GM12878 (cell line): ENCODE measurements at regions of chr4 and their contacts with region 1.

Region 1: GRCh38 chr4:26860157-26860921 is at the start of gene STIM2:
- DNase-seq: peak; percentile 91
- ATAC-seq: peak; percentile 71
- H3K4me3 ChIP-seq: peak within 1 kb of the TSS; percentile 84
- H3K27ac ChIP-seq: peak within 1 kb of the TSS; percentile 72
- H3K4me1 ChIP-seq: peaks cover 19% of the 10 kb centered on the region
- H3K27me3 ChIP-seq: no peaks in the 10 kb centered on the region
- CTCF ChIP-seq: peak; percentile 40 to 41 (median 41); a peak in 4 of 6 replicates
- EP300 ChIP-seq: no peak
- POLR2A ChIP-seq: peak; percentile 90
- RAD21 ChIP-seq: peak; percentile 58
- polyA plus RNA-seq, gene STIM2: 4.7 to 10.3 TPM

Region 2: GRCh38 chr4:26459054-26459755 is 401.1 kb before region 1 on chr4:
- CTCF ChIA-PET with region 1: no interaction called
- POLR2A ChIA-PET with region 1: no interaction called
- RAD21 ChIA-PET with region 1: no interaction called
- SMC1A ChIA-PET with region 1: no interaction called
- in situ Hi-C with region 1: no loop called
- intact Hi-C with region 1: loop called (anchors 5 kb)
- DNase-seq: peak; percentile 26
- ATAC-seq: peak; percentile 90
- H3K4me3 ChIP-seq: no peak overlapping the region
- H3K27ac ChIP-seq: no peak overlapping the region
- H3K4me1 ChIP-seq: no peaks in the 10 kb centered on the region; the same call in 1 of the 2 replicates
- H3K27me3 ChIP-seq: no peaks in the 10 kb centered on the region
- CTCF ChIP-seq: peak; percentile 53 to 65 (median 59); a peak in 5 of 6 replicates
- EP300 ChIP-seq: no peak
- POLR2A ChIP-seq: no peak
- RAD21 ChIP-seq: peak; percentile 76

Region 3: GRCh38 chr4:26746802-26747213 is 113.5 kb before region 1 on chr4:
- CTCF ChIA-PET with region 1: interaction called, 5 read pairs
- POLR2A ChIA-PET with region 1: no interaction called
- RAD21 ChIA-PET with region 1: interaction called, 7 read pairs
- SMC1A ChIA-PET with region 1: no interaction called
- in situ Hi-C with region 1: no loop called
- intact Hi-C with region 1: loop called (anchors 2 kb)
- DNase-seq: peak; percentile 55
- ATAC-seq: peak; percentile 100
- H3K4me3 ChIP-seq: no peak overlapping the region
- H3K27ac ChIP-seq: no peak overlapping the region
- H3K4me1 ChIP-seq: peaks cover 16% of the 10 kb centered on the region
- H3K27me3 ChIP-seq: no peaks in the 10 kb centered on the region
- CTCF ChIP-seq: no peak
- EP300 ChIP-seq: peak; percentile 78 to 96
- POLR2A ChIP-seq: no peak
- RAD21 ChIP-seq: 0 out of 2 replicates have a peak, but pooled peaks have one; percentile 10

Region 4: GRCh38 chr4:26907731-26908599 is 47.6 kb after region 1 on chr4:
- CTCF ChIA-PET with region 1: no interaction called
- POLR2A ChIA-PET with region 1: no interaction called
- RAD21 ChIA-PET with region 1: interaction called, 5 read pairs
- SMC1A ChIA-PET with region 1: interaction called, 5 read pairs
- in situ Hi-C with region 1: no loop called
- intact Hi-C with region 1: loop called (anchors 2 kb)
- DNase-seq: no peak
- ATAC-seq: peak; percentile 40
- H3K4me3 ChIP-seq: no peak overlapping the region
- H3K27ac ChIP-seq: no peak overlapping the region; the same call in 1 of the 2 replicates
- H3K4me1 ChIP-seq: peaks cover 21% of the 10 kb centered on the region
- H3K27me3 ChIP-seq: no peaks in the 10 kb centered on the region
- CTCF ChIP-seq: no peak
- EP300 ChIP-seq: no peak
- POLR2A ChIP-seq: no peak
- RAD21 ChIP-seq: no peak

Region 5: DNA sequence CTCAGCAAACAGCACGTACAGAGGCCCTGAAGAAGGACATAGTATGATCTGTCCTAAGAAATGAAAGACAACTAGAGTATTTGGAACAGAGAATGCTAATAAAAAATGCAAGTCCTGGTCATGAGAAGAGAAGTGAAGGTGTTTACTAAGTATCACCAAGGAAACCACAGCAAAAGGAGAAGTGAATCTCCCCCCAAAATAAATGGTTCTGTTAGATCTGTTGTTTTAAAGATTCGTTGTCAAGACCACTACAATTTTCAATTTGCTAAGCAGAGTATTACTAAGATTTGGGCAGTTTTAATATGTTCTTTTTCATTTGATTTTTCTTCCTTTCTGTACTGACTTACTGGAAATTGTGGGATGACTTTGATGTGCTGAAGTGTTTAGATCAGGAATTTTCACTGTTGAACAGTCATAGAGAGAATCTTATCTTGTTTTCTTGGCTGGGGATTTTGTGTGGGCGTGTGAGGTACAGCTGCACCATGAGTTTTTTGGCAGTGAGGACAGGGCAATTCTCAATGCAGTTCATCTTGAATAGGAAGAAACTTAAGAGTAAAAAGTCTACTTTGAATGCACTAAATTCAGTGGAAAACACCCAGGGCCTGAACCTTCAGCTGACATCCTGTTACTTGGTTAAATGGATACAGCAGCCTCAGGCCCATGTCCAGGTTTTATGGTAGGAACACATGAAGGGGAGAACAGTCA is 132.5 kb after region 1 on chr4:
- CTCF ChIA-PET with region 1: interaction called, 15 read pairs
- POLR2A ChIA-PET with region 1: interaction called, 31 read pairs
- RAD21 ChIA-PET with region 1: interaction called, 53 read pairs
- SMC1A ChIA-PET with region 1: interaction called, 55 read pairs
- in situ Hi-C with region 1: no loop called
- intact Hi-C with region 1: loop called (anchors 2 kb)
- DNase-seq: peak; percentile 72
- ATAC-seq: peak; percentile 94
- H3K4me3 ChIP-seq: peak overlapping the region; percentile 39; the same call in 1 of the 2 replicates
- H3K27ac ChIP-seq: peak overlapping the region; percentile 89
- H3K4me1 ChIP-seq: peaks cover 21% of the 10 kb centered on the region
- H3K27me3 ChIP-seq: no peaks in the 10 kb centered on the region
- CTCF ChIP-seq: no peak
- EP300 ChIP-seq: peak; percentile 78 to 84
- POLR2A ChIP-seq: no peak
- RAD21 ChIP-seq: no peak

Region 6: GRCh38 chr4:27010334-27010940 is 150.1 kb after region 1 on chr4:
- CTCF ChIA-PET with region 1: interaction called, 5 read pairs
- POLR2A ChIA-PET with region 1: no interaction called
- RAD21 ChIA-PET with region 1: interaction called, 21 read pairs
- SMC1A ChIA-PET with region 1: interaction called, 27 read pairs
- in situ Hi-C with region 1: no loop called
- intact Hi-C with region 1: no loop called
- DNase-seq: peak; percentile 16
- ATAC-seq: peak; percentile 77
- H3K4me3 ChIP-seq: no peak overlapping the region
- H3K27ac ChIP-seq: no peak overlapping the region
- H3K4me1 ChIP-seq: no peaks in the 10 kb centered on the region
- H3K27me3 ChIP-seq: no peaks in the 10 kb centered on the region
- CTCF ChIP-seq: peak; percentile 79 to 86 (median 81)
- EP300 ChIP-seq: no peak
- POLR2A ChIP-seq: no peak
- RAD21 ChIP-seq: peak; percentile 99